Activated naive CD4-positive, alpha-beta T cell treated with anti-CD3 and anti-CD28 coated beads for 36 hours (primary cell): ENCODE measurements at regions of chr4 and their contacts with region 1.

Region 1: DNA sequence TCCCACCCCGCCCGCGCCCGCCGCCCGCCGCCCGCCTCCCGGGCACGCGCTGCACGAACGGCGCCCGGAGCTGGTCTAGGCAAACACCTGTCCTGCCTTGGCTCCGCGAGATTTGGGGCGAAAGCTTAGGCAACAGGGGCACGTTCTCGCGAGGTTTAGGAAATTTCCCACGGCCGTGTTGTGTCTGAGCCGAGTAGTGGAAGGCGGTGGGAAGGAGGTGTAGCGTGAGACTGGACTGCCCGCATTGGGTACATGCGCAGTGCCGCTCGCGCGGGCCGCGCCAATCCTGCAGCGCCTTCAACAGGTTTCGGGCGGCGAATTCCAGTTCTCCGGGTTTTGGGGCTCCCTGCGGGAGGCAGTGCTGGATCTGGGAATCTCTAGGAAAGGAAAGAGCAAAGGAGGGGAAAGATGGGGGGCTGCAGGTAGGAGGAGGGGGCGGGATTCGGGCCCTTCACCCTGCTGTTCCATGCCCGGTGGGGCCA is 1.3 kb upstream of the RBPJ start:
- DNase-seq: peak; percentile 99
- H3K4me3 Mint-ChIP-seq: peak overlapping the region; percentile 97
- H3K27ac Mint-ChIP-seq: peak overlapping the region; percentile 99
- H3K4me1 Mint-ChIP-seq: peaks cover 26% of the 10 kb centered on the region
- H3K27me3 Mint-ChIP-seq: no peaks in the 10 kb centered on the region

Region 2: DNA sequence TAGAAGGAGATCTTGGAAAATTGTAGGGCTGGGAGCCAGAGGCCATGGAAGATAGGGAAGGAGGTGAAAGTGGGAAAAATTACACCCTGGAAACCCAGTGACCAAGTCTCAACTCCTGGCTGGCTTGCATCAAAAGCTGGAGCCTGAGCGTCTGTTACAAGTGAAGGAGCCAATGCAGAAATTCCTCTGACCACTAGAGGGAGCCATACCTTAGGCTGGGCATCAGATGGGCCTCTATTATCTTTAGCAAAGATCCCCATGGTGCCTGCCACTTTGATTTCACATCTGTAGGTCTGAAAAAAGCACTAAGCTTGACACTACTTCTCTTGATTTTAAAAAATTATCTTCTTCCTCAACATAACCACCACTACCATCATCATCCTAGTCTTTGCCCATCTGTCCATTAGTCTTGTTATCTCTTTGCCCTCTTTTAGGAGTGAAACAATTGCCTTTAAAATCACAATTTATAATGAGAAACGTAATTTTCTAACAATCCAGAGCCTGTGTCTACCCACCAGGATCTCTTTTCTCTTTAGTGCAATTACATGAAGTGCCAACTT is 879.5 kb before region 1 on chr4:
- CTCF ChIA-PET with region 1: no interaction called
- intact Hi-C with region 1: loop called (anchors 5 kb)
- DNase-seq: peak; percentile 77
- H3K4me3 Mint-ChIP-seq: no peak overlapping the region
- H3K27ac Mint-ChIP-seq: no peak overlapping the region
- H3K4me1 Mint-ChIP-seq: no peaks in the 10 kb centered on the region
- H3K27me3 Mint-ChIP-seq: no peaks in the 10 kb centered on the region

Region 3: GRCh38 chr4:25938787-25939186 is 380.7 kb before region 1 on chr4:
- CTCF ChIA-PET with region 1: no interaction called
- intact Hi-C with region 1: loop called (anchors 1 kb)
- DNase-seq: peak; percentile 68
- H3K4me3 Mint-ChIP-seq: no peak overlapping the region
- H3K27ac Mint-ChIP-seq: peak overlapping the region; percentile 5
- H3K4me1 Mint-ChIP-seq: peaks cover 20% of the 10 kb centered on the region
- H3K27me3 Mint-ChIP-seq: peaks cover 15% of the 10 kb centered on the region

Region 4: DNA sequence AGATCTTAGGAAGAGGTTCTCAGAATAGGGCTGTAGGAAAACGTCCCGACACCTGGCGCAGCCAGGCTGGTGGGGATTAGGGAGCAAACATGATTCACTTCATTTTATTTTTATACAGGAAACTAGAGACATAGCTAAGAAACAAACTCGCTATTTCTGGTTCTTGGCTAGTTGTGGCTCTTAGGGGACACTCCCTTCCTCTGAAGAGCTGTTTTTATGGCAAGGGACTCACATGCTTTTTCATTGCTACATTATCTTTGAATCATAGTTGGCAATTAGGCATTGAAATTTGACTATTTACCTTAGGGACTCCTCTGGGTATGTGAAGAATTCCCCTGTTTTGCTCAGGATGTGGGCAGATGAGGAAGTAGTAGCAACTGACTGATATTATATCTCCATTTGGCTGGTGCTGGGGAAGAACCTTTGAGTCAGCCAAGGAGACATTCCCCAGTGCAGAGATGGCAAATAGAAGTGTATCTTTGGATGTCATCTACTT is 231.0 kb before region 1 on chr4:
- CTCF ChIA-PET with region 1: interaction called, 5 read pairs
- intact Hi-C with region 1: loop called (anchors 1 kb)
- DNase-seq: peak; percentile 75
- H3K4me3 Mint-ChIP-seq: peak overlapping the region; percentile 19
- H3K27ac Mint-ChIP-seq: peak overlapping the region; percentile 93
- H3K4me1 Mint-ChIP-seq: peaks cover 47% of the 10 kb centered on the region
- H3K27me3 Mint-ChIP-seq: peaks cover 6% of the 10 kb centered on the region

Region 5: GRCh38 chr4:26307037-26307800 is 12.3 kb before region 1 on chr4:
- CTCF ChIA-PET with region 1: interaction called, 3 read pairs
- intact Hi-C with region 1: loop called (anchors 1 kb)
- DNase-seq: no peak
- H3K4me3 Mint-ChIP-seq: no peak overlapping the region
- H3K27ac Mint-ChIP-seq: peak overlapping the region; percentile 47
- H3K4me1 Mint-ChIP-seq: peaks cover 11% of the 10 kb centered on the region
- H3K27me3 Mint-ChIP-seq: no peaks in the 10 kb centered on the region

Region 6: GRCh38 chr4:26400132-26400531 is 80.6 kb after region 1 on chr4:
- CTCF ChIA-PET with region 1: no interaction called
- intact Hi-C with region 1: no loop called
- DNase-seq: no peak
- H3K4me3 Mint-ChIP-seq: no peak overlapping the region
- H3K27ac Mint-ChIP-seq: no peak overlapping the region
- H3K4me1 Mint-ChIP-seq: peaks cover 26% of the 10 kb centered on the region
- H3K27me3 Mint-ChIP-seq: no peaks in the 10 kb centered on the region

Region 7: DNA sequence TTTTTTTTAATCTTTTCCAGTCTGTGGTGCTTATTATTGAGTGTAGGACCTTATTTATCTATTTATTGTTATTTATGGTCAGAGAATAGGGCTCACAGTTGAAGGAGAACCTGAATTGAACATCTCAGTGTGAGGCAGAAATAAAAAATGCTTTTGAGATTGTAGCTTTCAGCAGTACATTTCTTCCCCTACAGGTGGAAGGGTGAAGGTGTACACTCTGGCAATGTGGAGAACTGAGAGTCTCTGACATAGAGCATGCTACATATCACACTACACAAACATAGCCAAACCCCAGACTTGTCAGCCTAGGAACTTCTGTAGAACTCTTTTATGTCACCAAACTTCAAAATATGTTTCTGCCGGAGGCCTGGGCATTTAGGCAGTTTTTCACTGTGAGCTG is 681.3 kb after region 1 on chr4:
- CTCF ChIA-PET with region 1: no interaction called
- intact Hi-C with region 1: loop called (anchors 1 kb)
- DNase-seq: peak; percentile 30
- H3K4me3 Mint-ChIP-seq: no peak overlapping the region
- H3K27ac Mint-ChIP-seq: no peak overlapping the region
- H3K4me1 Mint-ChIP-seq: peaks cover 63% of the 10 kb centered on the region
- H3K27me3 Mint-ChIP-seq: no peaks in the 10 kb centered on the region